ENCODE measurements at regions of chr20 and their contacts with region 1.

Region 1: GRCh38 chr20:5788385-5788895 is 38.2 kb downstream of the SHLD1 start:
- DNase-seq: peak; percentile 80
- ATAC-seq: peak; percentile 96

Region 2: GRCh38 chr20:5557123-5557522 is 231.3 kb before region 1 on chr20:
- intact Hi-C with region 1: loop called (anchors 5 kb)
- DNase-seq: peak; percentile 52
- ATAC-seq: peak; percentile 80

Region 3: DNA sequence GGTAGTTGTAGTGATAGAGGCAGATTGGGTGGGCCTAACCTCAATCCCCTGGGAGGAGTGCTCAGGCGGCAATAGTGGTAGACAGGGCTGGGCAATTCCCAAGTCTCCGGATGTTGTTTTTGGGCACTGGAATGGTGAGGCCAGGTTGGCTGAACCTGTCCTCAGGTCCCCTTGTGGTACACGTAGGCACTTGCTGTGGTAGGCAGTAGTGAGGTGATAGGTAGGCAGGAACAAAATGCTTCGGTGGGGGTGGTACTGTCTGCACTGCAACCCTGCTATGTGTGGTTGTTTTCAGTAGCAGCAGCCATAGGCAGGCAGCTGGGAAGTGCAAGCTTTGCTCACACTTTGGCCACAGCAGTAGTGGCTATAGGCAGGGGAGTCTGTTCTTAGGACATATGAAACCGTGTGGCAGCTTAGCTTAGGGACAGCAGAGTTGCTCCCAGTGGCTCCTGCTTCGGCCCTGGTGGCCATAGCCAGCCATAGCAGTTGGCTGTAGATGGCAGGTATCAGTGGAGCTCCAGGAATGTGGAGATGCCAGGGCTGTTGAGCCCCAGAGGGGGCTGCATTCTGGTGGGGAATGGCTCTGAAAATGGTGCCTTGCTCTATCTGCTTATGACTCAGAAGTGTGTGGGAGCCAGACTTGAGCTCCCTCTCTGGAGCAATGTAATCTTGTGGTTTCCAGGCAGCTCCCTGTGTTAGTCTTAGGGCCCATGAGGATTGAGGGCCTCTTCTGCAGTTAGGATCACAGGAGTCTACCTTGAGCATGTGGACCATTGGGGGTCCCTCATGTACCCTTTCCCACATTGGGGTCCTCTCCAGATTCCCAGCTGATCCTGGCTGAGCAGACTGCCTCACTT is 737.2 kb after region 1 on chr20:
- intact Hi-C with region 1: no loop called
- DNase-seq: no peak
- ATAC-seq: no peak

Measured in Right ventricle myocardium superior (tissue), 1 donor.